AG04449 (cell line): ENCODE measurements at regions of chr20 and their contacts with region 1.

Region 1: GRCh38 chr20:8853805-8854338 is 215.0 kb upstream of the PLCB4 start:
- DNase-seq: peak; percentile 16
- H3K4me3 ChIP-seq: no peak overlapping the region
- CTCF ChIP-seq: peak; percentile 70

Region 2: DNA sequence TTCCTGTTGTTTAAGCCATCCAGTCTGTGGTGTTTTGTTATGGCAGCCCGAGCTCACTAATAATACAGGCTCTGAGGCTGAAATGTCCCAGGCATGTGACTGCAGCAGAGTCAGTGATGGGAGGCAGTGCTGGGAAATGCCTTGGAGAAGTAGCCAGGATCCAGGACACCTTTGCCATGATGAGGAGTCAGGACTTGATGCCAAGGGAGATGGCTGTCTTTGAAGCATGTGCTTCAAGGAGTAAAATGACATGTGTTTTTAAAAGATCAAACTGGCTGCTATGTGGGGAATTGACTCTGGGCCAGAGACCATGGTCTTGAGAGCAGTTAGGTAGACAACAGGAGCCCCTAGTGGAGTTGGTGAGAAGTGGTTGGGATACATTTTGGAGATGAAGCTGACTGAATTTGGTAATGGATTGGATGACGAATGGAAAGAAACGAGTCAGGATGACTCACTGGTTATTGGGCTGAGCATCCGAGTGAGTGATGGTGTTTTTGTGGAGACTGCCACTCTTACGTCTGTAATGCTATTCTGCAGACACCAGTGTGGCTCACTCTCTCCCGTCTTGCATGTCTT is 399.6 kb before region 1 on chr20:
- CTCF ChIA-PET with region 1: no interaction called
- POLR2A ChIA-PET with region 1: no interaction called
- DNase-seq: peak; percentile 72
- H3K4me3 ChIP-seq: no peak overlapping the region
- CTCF ChIP-seq: peak; percentile 49

Region 3: GRCh38 chr20:8756410-8756809 is 97.5 kb before region 1 on chr20:
- CTCF ChIA-PET with region 1: interaction called, 10 read pairs
- POLR2A ChIA-PET with region 1: interaction called, 3 read pairs
- DNase-seq: peak; percentile 52
- H3K4me3 ChIP-seq: no peak overlapping the region
- CTCF ChIP-seq: no peak

Region 4: DNA sequence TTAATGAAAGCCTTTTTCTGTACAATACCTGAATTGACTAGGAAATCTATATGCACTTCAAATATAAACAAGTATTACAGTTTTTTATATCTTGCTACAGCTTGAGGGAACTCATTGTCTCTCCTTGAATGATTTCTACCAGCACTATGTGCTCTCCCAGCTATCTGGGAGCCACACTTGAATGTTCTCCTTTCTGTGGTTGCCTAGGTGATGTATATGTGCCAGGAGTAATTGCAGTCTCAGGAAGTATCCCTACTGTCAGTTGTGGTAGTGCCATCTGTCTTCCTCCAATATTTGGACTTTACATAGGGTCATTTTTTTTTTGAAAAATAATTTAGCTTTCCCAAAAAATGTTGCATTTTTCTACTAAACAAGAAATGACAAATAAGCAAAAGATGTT is 73.0 kb before region 1 on chr20:
- CTCF ChIA-PET with region 1: no interaction called
- POLR2A ChIA-PET with region 1: no interaction called
- DNase-seq: no peak
- H3K4me3 ChIP-seq: no peak overlapping the region
- CTCF ChIP-seq: no peak

Region 5: DNA sequence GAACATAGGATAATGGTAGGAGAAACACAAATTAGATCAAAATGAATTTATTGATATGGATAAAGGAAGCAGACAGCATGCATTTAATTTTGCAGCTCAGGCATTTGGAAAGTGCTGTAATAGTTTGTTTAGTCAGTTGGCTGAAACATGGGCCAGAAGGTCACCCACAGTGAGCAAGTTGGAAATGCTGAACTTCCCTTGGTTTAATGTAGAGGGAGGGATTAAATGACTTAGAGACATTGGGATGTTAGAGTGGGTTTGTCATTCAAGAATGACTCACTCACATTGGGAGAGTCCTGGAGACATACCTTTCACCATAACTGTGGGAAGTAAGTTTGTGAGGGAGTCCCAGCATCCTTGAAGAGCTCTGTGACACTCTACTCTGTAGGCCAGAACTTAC is 16.5 kb before region 1 on chr20:
- CTCF ChIA-PET with region 1: interaction called, 51 read pairs
- POLR2A ChIA-PET with region 1: no interaction called
- DNase-seq: peak; percentile 79
- H3K4me3 ChIP-seq: no peak overlapping the region
- CTCF ChIP-seq: no peak

Region 6: GRCh38 chr20:8867181-8867740 is 13.4 kb after region 1 on chr20:
- CTCF ChIA-PET with region 1: interaction called, 23 read pairs
- POLR2A ChIA-PET with region 1: no interaction called
- DNase-seq: no peak
- H3K4me3 ChIP-seq: no peak overlapping the region
- CTCF ChIP-seq: no peak

Region 7: GRCh38 chr20:9353180-9353915 is 499.5 kb after region 1 on chr20:
- CTCF ChIA-PET with region 1: interaction called, 27 read pairs
- POLR2A ChIA-PET with region 1: no interaction called
- DNase-seq: no peak
- H3K4me3 ChIP-seq: no peak overlapping the region
- CTCF ChIP-seq: no peak

Region 8: GRCh38 chr20:9392892-9393857 is 539.3 kb after region 1 on chr20:
- CTCF ChIA-PET with region 1: interaction called, 20 read pairs
- POLR2A ChIA-PET with region 1: no interaction called
- DNase-seq: no peak
- H3K4me3 ChIP-seq: no peak overlapping the region
- CTCF ChIP-seq: peak; percentile 91